T-cell (primary cell): ENCODE measurements at regions of chr10 and their contacts with region 1.

Region 1: DNA sequence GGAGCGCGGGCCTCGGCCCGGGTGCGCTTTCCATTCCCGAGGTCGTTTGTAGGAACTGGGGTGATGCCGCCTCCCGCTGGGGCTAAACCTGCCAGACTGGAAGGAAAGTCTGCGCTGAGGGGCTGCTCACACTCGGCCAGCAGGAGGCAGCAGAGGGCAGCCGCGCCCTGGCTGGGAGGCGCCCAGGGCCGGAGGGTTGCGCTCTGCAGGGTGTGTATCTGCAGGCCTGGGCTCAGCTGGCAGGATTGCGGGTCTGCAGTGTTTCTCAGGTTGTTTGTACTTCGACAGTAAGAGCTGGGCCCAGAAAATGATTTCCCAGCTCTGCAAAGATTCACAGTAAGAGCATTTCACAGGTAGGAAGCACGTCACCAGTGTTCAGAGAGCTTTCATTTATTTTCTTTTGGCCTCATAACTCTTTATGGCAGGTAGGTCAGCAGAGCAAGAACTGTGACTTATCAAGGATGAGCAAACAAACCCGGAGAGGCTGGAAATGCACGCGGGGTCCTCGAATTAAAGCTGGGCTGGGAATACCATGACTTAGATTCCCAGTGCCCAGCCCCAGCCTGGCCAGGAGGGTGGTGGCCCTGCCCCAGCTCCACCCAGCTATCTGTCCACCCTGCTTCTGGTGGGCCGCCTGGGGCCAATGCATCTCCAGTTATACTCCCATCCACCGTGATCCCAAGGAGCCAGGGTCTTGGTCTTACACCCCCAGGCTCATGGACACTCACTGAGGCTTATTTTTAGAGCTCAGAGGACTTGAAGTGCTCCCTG is 15.2 kb upstream of the PPP2R2D start:
- DNase-seq: peak; percentile 52 to 90 (median 76)
- ATAC-seq: peak; percentile 95 to 100 (median 98)
- H3K4me3 ChIP-seq: no peak overlapping the region
- H3K4me3 Mint-ChIP-seq: no peak overlapping the region
- H3K27ac ChIP-seq: no peak overlapping the region
- H3K27ac Mint-ChIP-seq: no peak overlapping the region
- H3K4me1 ChIP-seq: peaks cover 0 to 9% of the 10 kb centered on the region in 2 experiments
- H3K4me1 Mint-ChIP-seq: peaks cover 8 to 10% (median 9%) of the 10 kb centered on the region in 3 donors
- H3K27me3 ChIP-seq: peaks cover 0 to 50% of the 10 kb centered on the region in 2 experiments
- H3K27me3 Mint-ChIP-seq: peaks cover 8 to 14% of the 10 kb centered on the region in 2 donors

Region 2: DNA sequence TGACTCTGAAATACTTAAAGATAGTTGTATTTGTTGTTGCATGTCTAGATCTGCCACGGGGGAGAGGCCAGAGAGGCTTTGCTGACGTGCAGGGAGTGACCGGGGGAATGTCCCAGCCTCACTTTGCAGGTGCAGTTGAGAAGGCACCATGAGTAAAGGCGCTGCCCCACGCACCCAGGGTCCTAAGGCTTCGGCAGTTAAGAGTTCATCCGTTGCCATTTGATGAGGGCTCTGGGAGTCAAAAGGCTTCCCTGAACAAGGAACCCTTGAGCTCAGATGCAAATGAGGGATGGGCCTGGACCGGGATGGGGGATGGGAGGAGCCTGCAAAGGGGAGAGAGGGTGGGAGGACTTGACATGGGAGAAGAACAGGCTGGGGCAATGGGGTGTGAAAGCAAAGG is 35.6 kb after region 1 on chr10:
- CTCF ChIA-PET with region 1: no interaction called
- POLR2A ChIA-PET with region 1: no interaction called
- DNase-seq: no peak
- ATAC-seq: no peak
- H3K4me3 ChIP-seq: no peak overlapping the region
- H3K4me3 Mint-ChIP-seq: no peak overlapping the region
- H3K27ac ChIP-seq: no peak overlapping the region
- H3K27ac Mint-ChIP-seq: no peak overlapping the region
- H3K4me1 ChIP-seq: peaks cover 0 to 9% of the 10 kb centered on the region in 2 experiments
- H3K4me1 Mint-ChIP-seq: peaks cover 74% of the 10 kb centered on the region in 3 donors
- H3K27me3 ChIP-seq: no peaks in the 10 kb centered on the region
- H3K27me3 Mint-ChIP-seq: no peaks in the 10 kb centered on the region

Region 3: DNA sequence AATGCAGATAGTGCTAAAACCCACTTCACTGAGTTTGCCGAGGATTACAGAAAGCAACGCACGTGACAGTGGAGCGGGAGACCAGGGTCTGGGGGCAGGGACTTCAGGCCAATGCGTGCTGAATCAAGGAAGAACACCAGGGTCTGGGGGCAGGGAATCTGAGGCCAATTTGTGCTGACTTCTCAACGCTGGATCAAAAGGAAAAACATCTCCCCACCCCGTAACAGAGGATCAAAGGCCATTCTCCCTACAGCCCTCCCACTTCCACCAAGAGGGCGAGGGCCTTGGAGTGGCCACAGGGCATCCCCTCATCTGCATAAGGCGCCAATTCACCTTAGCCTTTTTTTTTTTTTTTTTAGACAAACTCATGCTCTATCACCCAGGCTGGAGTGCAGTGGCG is 118.5 kb after region 1 on chr10:
- CTCF ChIA-PET with region 1: interaction called in 1 of 2 experiments, 13 read pairs
- POLR2A ChIA-PET with region 1: no interaction called
- DNase-seq: no peak
- ATAC-seq: no peak
- H3K4me3 ChIP-seq: no peak overlapping the region
- H3K4me3 Mint-ChIP-seq: no peak overlapping the region
- H3K27ac ChIP-seq: no peak overlapping the region
- H3K27ac Mint-ChIP-seq: no peak overlapping the region
- H3K4me1 ChIP-seq: no peaks in the 10 kb centered on the region
- H3K4me1 Mint-ChIP-seq: peaks cover 0 to 5% (median 0%) of the 10 kb centered on the region in 3 donors
- H3K27me3 ChIP-seq: peaks cover 0 to 33% of the 10 kb centered on the region in 2 experiments
- H3K27me3 Mint-ChIP-seq: peaks cover 12 to 13% of the 10 kb centered on the region in 2 donors

Region 4: DNA sequence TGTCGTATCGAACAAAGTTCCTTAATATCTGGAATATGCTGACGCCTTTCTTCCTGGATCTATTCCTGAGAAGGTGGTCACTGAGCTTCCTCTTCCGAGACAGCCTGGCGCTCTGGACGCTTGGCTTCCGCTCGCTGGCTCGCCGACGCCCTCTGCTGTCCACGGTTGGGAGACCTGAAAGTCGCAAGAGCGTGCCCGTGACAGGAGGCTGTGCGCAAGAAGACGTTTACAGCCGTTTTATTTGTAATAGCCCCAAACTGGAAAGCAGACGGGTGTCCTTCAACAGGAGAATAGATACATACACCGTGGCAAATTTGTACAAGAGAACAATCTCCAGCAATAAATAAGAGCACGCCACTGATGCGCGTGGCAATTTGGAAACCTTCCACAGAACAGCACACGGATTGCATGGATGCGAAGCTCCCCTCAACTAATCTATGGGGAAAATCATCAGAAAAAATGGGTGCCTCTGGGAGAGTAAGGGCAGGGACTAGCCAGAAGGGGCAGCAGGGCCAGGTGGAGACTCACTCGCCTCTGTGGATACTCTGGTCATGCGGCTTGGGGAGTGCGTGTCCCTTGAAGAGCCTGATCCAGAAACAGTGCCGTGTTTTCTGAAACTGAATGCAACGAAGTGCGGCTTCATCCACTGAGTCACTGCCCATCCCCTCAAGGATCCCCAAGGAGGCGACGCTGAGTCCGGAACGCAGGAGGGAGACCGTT is 137.7 kb after region 1 on chr10:
- CTCF ChIA-PET with region 1: interaction called, 19 to 39 read pairs
- POLR2A ChIA-PET with region 1: interaction called in 1 of 2 experiments, 3 read pairs
- DNase-seq: peak; percentile 30 to 86 (median 68)
- ATAC-seq: peak; percentile 81 to 90 (median 83)
- H3K4me3 ChIP-seq: no peak overlapping the region
- H3K4me3 Mint-ChIP-seq: peak overlapping the region in 2 of 3 donors; percentile 4 to 48
- H3K27ac ChIP-seq: no peak overlapping the region
- H3K27ac Mint-ChIP-seq: no peak overlapping the region
- H3K4me1 ChIP-seq: peaks cover 0 to 10% of the 10 kb centered on the region in 2 experiments
- H3K4me1 Mint-ChIP-seq: peaks cover 7 to 8% (median 8%) of the 10 kb centered on the region in 3 donors
- H3K27me3 ChIP-seq: peaks cover 0 to 39% of the 10 kb centered on the region in 2 experiments
- H3K27me3 Mint-ChIP-seq: peaks cover 28 to 32% of the 10 kb centered on the region in 2 donors